ENCODE measurements at regions of chr17 and their contacts with region 1.

Region 1: GRCh38 chr17:76014184-76014924 is 12.8 kb downstream of the EVPL start:
- DNase-seq: no peak
- H3K4me3 ChIP-seq: no peak overlapping the region
- CTCF ChIP-seq: peak; percentile 92

Region 2: DNA sequence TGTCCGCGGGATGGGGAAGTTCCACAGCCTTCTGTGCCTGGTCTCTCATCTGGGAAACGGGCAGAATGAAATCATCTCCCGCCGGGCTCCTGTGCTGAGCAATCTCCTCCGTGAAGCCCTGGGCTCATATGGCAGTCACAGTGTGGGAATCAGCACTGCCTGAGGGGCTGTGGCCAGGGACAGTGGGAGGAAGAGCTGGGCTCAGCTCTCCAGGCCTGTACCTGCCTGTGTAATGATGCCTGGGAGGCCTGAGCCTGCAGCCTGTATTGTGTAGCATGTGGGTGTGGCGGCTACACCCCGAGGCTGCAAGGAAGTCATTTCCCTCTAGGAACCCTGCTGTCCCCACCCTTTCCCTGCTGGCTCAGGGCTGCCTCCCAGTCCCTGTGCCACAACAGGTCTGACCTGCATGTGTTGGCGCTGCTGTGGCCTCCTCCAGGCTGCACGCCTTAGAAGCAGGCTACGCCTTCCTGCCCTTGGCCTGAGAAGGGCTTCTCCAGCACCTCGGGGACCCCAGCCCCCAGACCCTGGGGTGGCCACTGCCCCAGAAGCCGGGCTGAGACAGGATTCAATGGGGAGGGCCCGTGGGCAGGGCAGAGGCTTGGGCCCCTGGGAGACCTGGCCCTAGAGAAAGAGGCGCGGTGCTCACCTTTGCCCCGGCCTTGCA is 291.1 kb before region 1 on chr17:
- CTCF ChIA-PET with region 1: no interaction called
- POLR2A ChIA-PET with region 1: no interaction called
- DNase-seq: no peak
- H3K4me3 ChIP-seq: no peak overlapping the region
- CTCF ChIP-seq: no peak

Region 3: GRCh38 chr17:75979705-75980187 is 34.6 kb before region 1 on chr17:
- CTCF ChIA-PET with region 1: interaction called, 22 read pairs
- POLR2A ChIA-PET with region 1: no interaction called
- DNase-seq: no peak
- H3K4me3 ChIP-seq: peak overlapping the region; percentile 89
- CTCF ChIP-seq: no peak

Region 4: DNA sequence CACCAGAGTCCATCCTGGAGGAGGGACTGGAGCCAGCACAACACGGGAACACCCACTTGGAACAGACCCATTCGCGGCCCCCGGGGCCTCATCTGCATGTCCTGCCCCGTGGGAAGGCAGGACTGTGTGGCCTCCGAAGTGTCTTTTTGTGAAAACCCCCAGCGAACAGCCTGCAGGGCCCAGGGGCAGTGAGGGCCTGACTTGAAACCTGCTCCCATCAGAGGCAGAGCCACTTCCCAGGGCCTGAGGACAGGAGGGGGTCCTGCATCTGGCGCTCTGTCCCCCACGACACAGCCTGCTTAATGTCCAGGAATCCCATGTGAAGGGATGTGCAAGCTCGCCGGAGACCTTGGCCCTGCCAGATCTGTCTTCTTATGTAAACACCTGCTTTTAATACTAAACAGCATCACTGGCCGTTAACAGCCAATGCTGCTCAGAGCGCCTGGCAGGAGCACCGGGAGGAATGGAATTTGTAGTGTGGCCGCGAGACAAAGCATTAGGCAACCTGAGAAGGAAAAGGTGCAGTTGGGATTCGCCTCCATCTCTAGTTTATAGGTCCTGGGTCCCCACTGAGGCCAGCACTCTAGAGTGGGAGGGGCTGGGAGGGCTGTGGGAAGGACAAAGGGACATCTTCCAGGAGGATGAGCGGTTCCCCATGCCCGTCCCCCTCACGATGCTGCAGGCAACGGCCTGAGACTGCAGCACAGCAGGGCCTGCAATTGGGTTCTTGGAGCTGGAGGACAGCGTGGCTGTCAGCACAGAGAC is 22.3 kb after region 1 on chr17:
- CTCF ChIA-PET with region 1: interaction called, 52 read pairs
- POLR2A ChIA-PET with region 1: no interaction called
- DNase-seq: no peak
- H3K4me3 ChIP-seq: no peak overlapping the region
- CTCF ChIP-seq: no peak

Region 5: GRCh38 chr17:76053246-76054116 is 39.1 kb after region 1 on chr17:
- CTCF ChIA-PET with region 1: interaction called, 11 read pairs
- POLR2A ChIA-PET with region 1: no interaction called
- DNase-seq: no peak
- H3K4me3 ChIP-seq: no peak overlapping the region
- CTCF ChIP-seq: no peak

Region 6: DNA sequence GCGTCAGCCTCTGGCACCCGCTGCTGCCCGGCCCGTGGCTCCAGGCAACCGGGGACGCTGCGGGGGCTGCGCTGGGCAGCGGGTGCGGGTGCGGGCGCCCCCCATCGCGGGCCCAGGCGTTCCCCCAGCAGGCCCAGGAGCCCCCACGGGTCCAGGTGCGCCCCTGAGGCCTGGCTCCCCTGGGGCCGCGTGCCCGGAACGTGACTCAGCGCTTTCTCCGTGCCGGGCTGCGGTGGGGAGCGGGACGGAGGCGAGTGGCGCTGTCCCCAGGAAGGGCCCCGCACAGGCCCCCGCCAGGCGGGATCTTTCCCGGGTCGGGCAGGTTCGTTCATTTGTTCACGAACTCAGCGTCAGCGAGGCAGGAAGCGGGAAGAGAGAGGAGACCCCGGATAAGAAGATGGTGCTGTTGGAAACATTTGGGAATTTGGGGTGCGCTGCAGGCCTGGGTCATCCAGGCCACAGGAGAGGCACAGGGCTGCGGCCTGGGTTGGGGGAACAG is 107.6 kb after region 1 on chr17:
- CTCF ChIA-PET with region 1: interaction called, 12 read pairs
- POLR2A ChIA-PET with region 1: no interaction called
- DNase-seq: no peak
- H3K4me3 ChIP-seq: peak overlapping the region; percentile 23
- CTCF ChIP-seq: no peak

Region 7: GRCh38 chr17:76182016-76182764 is 167.8 kb after region 1 on chr17:
- CTCF ChIA-PET with region 1: interaction called, 46 read pairs
- POLR2A ChIA-PET with region 1: no interaction called
- DNase-seq: peak; percentile 14
- H3K4me3 ChIP-seq: no peak overlapping the region
- CTCF ChIP-seq: peak; percentile 91

Region 8: GRCh38 chr17:76296186-76296585 is 281.8 kb after region 1 on chr17:
- CTCF ChIA-PET with region 1: interaction called, 35 read pairs
- POLR2A ChIA-PET with region 1: no interaction called
- DNase-seq: no peak
- H3K4me3 ChIP-seq: no peak overlapping the region
- CTCF ChIP-seq: no peak